Uterus (tissue), 4 donors: ENCODE measurements at regions of chr5 and their contacts with region 1.

Region 1: GRCh38 chr5:34522599-34523386 is 133.3 kb upstream of the RAI14 start:
- DNase-seq: peak; percentile 72 to 89
- H3K4me3 ChIP-seq: no peak overlapping the region
- H3K27ac ChIP-seq: peak overlapping the region; percentile 50 to 65
- H3K4me1 ChIP-seq: no peaks in the 10 kb centered on the region
- H3K27me3 ChIP-seq: no peaks in the 10 kb centered on the region
- CTCF ChIP-seq: peak; percentile 66 to 83 (median 78)
- POLR2A ChIP-seq: no peak

Region 2: DNA sequence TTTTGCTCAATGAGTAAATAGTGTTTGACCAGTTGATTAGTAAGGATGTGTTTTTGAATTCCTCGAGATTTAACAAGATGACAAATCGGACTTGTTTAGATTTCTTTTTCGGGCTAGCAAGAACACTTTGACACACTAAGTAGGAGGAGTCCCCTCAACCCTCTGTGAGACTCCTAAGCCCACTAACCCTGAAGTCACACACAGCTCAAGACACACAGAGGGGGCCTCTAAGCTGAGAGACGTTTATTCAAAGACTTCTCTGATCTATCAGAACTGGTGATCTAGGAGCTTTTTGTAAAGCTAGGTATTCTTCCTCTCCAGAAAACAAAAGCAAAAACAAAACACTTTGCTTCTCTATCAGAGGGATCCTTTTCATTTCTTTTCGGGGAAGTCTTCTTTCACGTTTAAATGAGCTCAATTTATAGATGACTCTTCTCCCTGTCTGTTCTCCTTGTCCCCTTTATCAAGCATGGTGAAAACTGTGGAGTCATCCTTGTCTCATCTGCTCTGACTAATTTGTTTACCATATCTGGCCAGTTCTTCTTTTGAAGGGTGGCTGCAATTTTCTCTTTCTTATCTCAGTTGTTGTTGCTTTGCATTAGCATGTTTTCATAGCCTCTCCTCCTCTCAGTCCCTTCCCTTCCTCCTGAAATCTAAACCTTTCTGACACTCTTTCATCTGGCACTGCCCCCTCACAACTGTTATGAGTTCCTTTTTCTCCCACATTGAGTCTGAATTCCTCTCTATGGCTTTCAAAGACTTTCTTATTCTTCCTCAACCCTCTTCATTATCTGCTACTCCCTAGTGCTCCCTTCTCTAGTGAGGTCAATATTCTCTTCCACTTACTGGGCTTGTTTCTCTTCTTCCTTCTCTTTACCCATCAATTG is 64.8 kb after region 1 on chr5:
- intact Hi-C with region 1: no loop called
- DNase-seq: no peak
- H3K4me3 ChIP-seq: no peak overlapping the region
- H3K27ac ChIP-seq: peak overlapping the region; percentile 67
- H3K4me1 ChIP-seq: no peaks in the 10 kb centered on the region
- H3K27me3 ChIP-seq: no peaks in the 10 kb centered on the region
- CTCF ChIP-seq: no peak
- POLR2A ChIP-seq: no peak

Region 3: GRCh38 chr5:34627794-34628193 is 105.0 kb after region 1 on chr5:
- intact Hi-C with region 1: no loop called
- DNase-seq: no peak
- H3K4me3 ChIP-seq: no peak overlapping the region
- H3K27ac ChIP-seq: no peak overlapping the region
- H3K4me1 ChIP-seq: no peaks in the 10 kb centered on the region
- H3K27me3 ChIP-seq: no peaks in the 10 kb centered on the region
- CTCF ChIP-seq: no peak
- POLR2A ChIP-seq: no peak

Region 4: DNA sequence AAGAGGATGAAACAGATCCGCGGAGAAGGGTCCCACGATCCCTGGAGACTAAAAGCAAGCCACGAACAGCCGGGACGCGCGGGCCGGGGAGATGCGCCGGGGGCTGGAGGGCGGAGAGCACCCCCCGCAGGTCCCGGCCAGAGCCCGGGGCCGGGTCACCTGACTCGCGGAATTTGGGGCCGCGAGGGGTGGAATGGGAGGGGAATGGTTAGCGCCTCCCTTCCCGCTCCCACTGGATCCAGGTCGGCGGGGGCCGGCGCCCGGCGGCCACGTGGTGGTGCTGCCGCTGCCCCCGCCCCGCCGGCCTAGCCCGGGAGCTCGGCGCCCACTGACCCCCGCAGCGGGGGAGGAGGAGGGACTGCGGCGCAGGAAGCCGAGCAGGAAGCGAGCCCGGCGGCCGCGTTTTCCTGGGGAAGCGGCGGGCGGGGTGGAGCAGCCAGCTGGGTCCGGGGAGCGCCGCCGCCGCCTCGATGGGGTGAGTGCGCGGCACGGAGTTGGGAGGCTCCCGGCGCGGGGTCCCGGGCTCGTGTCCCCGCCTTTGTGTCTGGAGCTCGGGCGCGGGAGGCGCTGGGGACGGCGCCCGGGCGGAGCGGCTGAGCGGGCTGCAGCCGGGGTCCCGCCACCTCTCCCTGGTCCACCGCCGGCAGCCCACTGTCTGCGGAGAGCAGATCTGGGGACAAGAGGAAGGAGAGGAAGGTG is 133.4 kb after region 1 on chr5 and contains the start of gene RAI14:
- intact Hi-C with region 1: loop called (anchors 10 kb)
- DNase-seq: peak; percentile 88 to 89
- H3K4me3 ChIP-seq: peak within 1 kb of the TSS; percentile 72 to 99
- H3K27ac ChIP-seq: peak within 1 kb of the TSS; percentile 96 to 99
- H3K4me1 ChIP-seq: no peaks in the 10 kb centered on the region
- H3K27me3 ChIP-seq: no peaks in the 10 kb centered on the region
- CTCF ChIP-seq: peak in 3 of 4 experiments; percentile 5 to 30 (median 24)
- POLR2A ChIP-seq: peak; percentile 29 to 87
- total RNA-seq, gene RAI14: 32.4 to 264 (median 117) TPM

Region 5: GRCh38 chr5:34743878-34744277 is 221.1 kb after region 1 on chr5:
- intact Hi-C with region 1: no loop called
- DNase-seq: no peak
- H3K4me3 ChIP-seq: no peak overlapping the region
- H3K27ac ChIP-seq: no peak overlapping the region
- H3K4me1 ChIP-seq: peaks cover 0 to 11% of the 10 kb centered on the region in 2 donors
- H3K27me3 ChIP-seq: no peaks in the 10 kb centered on the region
- CTCF ChIP-seq: no peak
- POLR2A ChIP-seq: no peak

Region 6: GRCh38 chr5:34898258-34898895 is 375.6 kb after region 1 on chr5:
- intact Hi-C with region 1: loop called (anchors 5 kb)
- DNase-seq: peak; percentile 71 to 77
- H3K4me3 ChIP-seq: no peak overlapping the region
- H3K27ac ChIP-seq: no peak overlapping the region
- H3K4me1 ChIP-seq: no peaks in the 10 kb centered on the region
- H3K27me3 ChIP-seq: peaks cover 0 to 2% of the 10 kb centered on the region in 2 donors
- CTCF ChIP-seq: peak; percentile 82 to 92 (median 85)
- POLR2A ChIP-seq: no peak